Posterior vena cava (tissue), 2 donors: ENCODE measurements at regions of chr13 and their contacts with region 1.

Region 1: GRCh38 chr13:44120849-44121755 is 241.4 kb downstream of the LACC1 start:
- DNase-seq: no peak

Region 2: DNA sequence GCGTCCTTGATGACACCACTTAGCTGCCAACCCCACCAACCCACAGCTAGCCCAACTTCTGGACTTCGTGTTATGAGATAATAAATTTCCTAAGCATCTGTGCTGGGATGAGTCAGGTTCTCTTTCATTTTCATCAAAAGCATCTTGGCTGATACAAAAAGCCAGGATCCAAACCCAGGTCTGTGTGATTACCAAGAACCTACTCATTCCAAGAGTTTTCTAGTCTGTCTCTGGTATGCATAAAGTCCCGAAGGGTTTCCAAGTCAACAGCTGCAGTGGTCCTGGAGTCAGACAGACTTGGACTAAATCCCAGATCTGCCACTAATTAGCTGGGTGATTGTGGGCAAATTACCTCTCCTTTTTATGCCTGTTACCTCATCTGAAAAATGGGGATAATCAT is 197.1 kb after region 1 on chr13:
- intact Hi-C with region 1: no loop called
- DNase-seq: no peak

Region 3: GRCh38 chr13:45422731-45423292 is 1301.7 kb after region 1 on chr13:
- intact Hi-C with region 1: loop called in 1 of 2 experiments (anchors 5 kb)
- DNase-seq: no peak